Activated CD8-positive, alpha-beta T cell treated with anti-CD3 and anti-CD28 coated beads, Interleukin-2, amount 10 ng/mL, durations not matched to agents 7 days and 5 days (primary cell): ENCODE measurements at regions of chr1 and their contacts with region 1.

Region 1: GRCh38 chr1:9455487-9456234 is 83.6 kb upstream of the SLC25A33 start:
- DNase-seq: peak; percentile 70
- ATAC-seq: peak; percentile 60
- H3K4me3 Mint-ChIP-seq: no peak overlapping the region
- H3K27ac Mint-ChIP-seq: no peak overlapping the region
- H3K4me1 Mint-ChIP-seq: no peaks in the 10 kb centered on the region
- H3K27me3 Mint-ChIP-seq: peaks cover 3% of the 10 kb centered on the region

Region 2: GRCh38 chr1:9281908-9282695 is 173.6 kb before region 1 on chr1:
- CTCF ChIA-PET with region 1: interaction called, 16 read pairs
- POLR2A ChIA-PET with region 1: no interaction called
- DNase-seq: no peak
- ATAC-seq: no peak
- H3K4me3 Mint-ChIP-seq: no peak overlapping the region
- H3K27ac Mint-ChIP-seq: peak overlapping the region; percentile 77
- H3K4me1 Mint-ChIP-seq: peaks cover 65% of the 10 kb centered on the region
- H3K27me3 Mint-ChIP-seq: peaks cover 9% of the 10 kb centered on the region

Region 3: GRCh38 chr1:9292361-9293240 is 163.1 kb before region 1 on chr1 and contains the start of gene SPSB1:
- CTCF ChIA-PET with region 1: interaction called, 89 read pairs
- POLR2A ChIA-PET with region 1: no interaction called
- DNase-seq: peak; percentile 72
- ATAC-seq: peak; percentile 76
- H3K4me3 Mint-ChIP-seq: peak within 1 kb of the TSS; percentile 51
- H3K27ac Mint-ChIP-seq: no peak within 1 kb of the TSS
- H3K4me1 Mint-ChIP-seq: no peaks in the 10 kb centered on the region
- H3K27me3 Mint-ChIP-seq: peaks cover 11% of the 10 kb centered on the region
- total RNA-seq, gene SPSB1: 1.1 TPM

Region 4: DNA sequence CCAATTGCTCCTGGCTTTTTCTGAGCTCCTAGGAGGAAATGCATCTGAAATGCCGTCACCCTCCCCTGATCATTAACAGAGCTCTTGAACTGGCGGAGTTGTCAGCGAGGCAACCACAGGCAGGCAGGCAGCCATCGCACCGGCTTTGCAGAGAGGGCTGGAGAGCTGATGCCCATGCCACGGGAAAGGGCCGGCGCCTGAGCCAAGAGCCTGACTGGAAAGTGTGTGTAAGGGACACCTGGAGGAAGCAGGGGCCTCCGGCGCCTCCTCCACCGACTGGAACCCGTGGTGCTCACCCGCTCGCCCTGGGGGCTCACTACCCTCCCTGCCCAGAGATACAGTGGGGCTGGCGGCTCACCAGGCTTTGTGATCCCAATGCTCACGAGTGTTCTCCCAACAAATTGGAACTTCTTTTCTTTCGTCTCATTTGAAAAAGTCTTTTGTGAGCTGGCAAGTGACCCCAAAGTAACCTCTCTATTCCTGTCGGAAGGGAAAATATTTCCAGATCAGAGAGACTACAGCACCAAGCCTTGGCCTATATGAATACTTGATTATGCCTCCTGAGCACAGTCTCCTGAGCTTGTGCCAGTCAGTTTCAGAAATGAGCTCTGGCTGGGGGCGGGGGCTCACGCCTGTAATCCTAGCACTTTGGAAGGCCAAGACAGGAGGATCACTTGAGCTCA is 14.1 kb before region 1 on chr1:
- CTCF ChIA-PET with region 1: interaction called, 11 read pairs
- POLR2A ChIA-PET with region 1: no interaction called
- DNase-seq: no peak
- ATAC-seq: no peak
- H3K4me3 Mint-ChIP-seq: no peak overlapping the region
- H3K27ac Mint-ChIP-seq: no peak overlapping the region
- H3K4me1 Mint-ChIP-seq: no peaks in the 10 kb centered on the region
- H3K27me3 Mint-ChIP-seq: peaks cover 20% of the 10 kb centered on the region

Region 5: DNA sequence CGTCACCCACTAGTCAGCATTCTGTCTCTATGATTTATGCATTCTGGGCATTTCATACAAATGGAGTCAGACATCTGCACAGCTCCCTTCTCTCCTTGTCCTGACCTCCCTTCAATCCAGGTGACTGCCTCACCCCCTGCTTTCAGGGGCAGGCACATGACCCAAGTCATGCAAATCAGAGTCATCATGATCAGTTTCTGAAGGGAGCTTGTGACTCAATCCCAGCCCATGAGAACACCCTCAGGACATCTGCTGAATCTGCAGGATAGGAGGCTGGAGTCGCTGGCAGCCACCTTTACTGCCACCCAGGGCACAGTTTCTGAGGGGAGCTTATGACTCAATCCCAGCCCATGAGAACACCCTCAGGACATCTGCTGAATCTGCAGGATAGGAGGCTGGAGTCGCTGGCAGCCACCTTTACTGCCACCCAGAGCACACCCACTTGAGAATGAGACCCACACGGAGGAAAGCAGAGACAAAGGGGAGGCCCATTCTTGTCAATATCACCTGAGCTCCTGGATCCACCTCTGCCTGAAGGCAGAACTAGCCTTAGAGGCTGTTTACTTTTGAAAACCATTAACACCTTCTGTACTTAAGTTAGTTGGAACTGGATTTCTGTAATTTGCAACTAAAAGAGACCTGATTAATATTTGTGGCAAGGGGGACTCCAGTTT is 21.3 kb after region 1 on chr1:
- CTCF ChIA-PET with region 1: no interaction called
- POLR2A ChIA-PET with region 1: no interaction called
- DNase-seq: no peak
- ATAC-seq: no peak
- H3K4me3 Mint-ChIP-seq: no peak overlapping the region
- H3K27ac Mint-ChIP-seq: no peak overlapping the region
- H3K4me1 Mint-ChIP-seq: no peaks in the 10 kb centered on the region
- H3K27me3 Mint-ChIP-seq: peaks cover 8% of the 10 kb centered on the region